Activated CD4-positive, alpha-beta T cell treated with anti-CD3 and anti-CD28 coated beads, Interleukin-2, amount 10 ng/mL, durations not matched to agents 24 days and 14 days (primary cell): ENCODE measurements at regions of chr18 and their contacts with region 1.

Region 1: GRCh38 chr18:36284671-36285295 is 12.7 kb upstream of the FHOD3 start:
- DNase-seq: peak; percentile 83
- H3K4me3 Mint-ChIP-seq: no peak overlapping the region
- H3K27ac Mint-ChIP-seq: no peak overlapping the region
- H3K4me1 Mint-ChIP-seq: peaks cover 3% of the 10 kb centered on the region
- H3K27me3 Mint-ChIP-seq: peaks cover 27% of the 10 kb centered on the region

Region 2: GRCh38 chr18:35756506-35757117 is 528.2 kb before region 1 on chr18:
- intact Hi-C with region 1: loop called (anchors 1 kb)
- DNase-seq: peak; percentile 87
- H3K4me3 Mint-ChIP-seq: no peak overlapping the region
- H3K27ac Mint-ChIP-seq: no peak overlapping the region
- H3K4me1 Mint-ChIP-seq: no peaks in the 10 kb centered on the region
- H3K27me3 Mint-ChIP-seq: peaks cover 16% of the 10 kb centered on the region

Region 3: DNA sequence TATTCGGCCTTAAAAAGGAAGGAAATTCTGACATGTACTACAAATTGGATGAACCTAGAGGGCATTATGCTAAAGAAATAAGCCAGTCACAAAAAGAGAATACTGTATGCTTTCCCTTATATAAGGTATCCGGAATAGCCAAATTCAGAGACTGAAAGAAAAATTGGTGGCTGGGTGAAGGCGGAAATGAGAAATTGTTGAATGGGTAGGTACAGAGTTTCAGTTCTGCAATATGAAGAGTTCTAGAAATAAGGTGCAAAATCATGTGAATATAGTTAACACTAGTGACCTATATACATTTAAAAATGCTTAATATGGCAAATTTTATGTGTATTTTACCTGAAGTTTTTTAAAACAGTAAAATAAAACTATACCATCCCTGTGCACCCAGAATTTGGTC is 269.2 kb before region 1 on chr18:
- intact Hi-C with region 1: loop called (anchors 1 kb)
- DNase-seq: no peak
- H3K4me3 Mint-ChIP-seq: no peak overlapping the region
- H3K27ac Mint-ChIP-seq: no peak overlapping the region
- H3K4me1 Mint-ChIP-seq: no peaks in the 10 kb centered on the region
- H3K27me3 Mint-ChIP-seq: no peaks in the 10 kb centered on the region

Region 4: DNA sequence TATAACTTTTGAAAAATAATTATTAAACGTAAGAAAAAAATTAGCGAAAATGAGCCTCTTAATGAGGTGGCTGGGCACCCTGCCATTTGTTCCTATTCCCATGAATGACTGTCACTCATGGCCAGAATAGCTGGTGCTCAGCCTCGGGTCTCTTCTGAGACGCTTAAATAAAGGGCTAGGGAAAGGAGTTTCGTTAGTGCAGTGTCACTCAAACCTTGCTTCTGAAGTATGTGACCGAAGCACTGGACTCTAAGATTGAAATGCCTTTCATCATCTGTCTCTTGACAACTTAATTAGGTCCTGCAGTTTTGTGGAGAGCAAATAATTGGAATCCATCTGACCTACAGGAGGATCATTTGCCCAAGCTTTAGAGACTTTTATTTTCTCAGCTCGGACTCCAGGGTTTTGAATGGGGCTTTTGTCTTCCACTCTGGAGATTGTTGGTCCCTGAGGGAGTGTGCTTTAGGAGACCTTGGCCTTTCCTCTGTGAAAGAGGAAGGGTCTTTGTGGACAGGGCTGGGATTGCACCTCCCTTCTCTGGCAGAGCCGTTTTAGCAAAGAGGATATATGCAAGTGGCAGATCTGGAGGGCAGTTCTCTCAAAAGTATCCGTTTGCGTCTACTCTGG is 29.6 kb before region 1 on chr18:
- intact Hi-C with region 1: no loop called
- DNase-seq: no peak
- H3K4me3 Mint-ChIP-seq: no peak overlapping the region
- H3K27ac Mint-ChIP-seq: no peak overlapping the region
- H3K4me1 Mint-ChIP-seq: no peaks in the 10 kb centered on the region
- H3K27me3 Mint-ChIP-seq: peaks cover 6% of the 10 kb centered on the region

Region 5: DNA sequence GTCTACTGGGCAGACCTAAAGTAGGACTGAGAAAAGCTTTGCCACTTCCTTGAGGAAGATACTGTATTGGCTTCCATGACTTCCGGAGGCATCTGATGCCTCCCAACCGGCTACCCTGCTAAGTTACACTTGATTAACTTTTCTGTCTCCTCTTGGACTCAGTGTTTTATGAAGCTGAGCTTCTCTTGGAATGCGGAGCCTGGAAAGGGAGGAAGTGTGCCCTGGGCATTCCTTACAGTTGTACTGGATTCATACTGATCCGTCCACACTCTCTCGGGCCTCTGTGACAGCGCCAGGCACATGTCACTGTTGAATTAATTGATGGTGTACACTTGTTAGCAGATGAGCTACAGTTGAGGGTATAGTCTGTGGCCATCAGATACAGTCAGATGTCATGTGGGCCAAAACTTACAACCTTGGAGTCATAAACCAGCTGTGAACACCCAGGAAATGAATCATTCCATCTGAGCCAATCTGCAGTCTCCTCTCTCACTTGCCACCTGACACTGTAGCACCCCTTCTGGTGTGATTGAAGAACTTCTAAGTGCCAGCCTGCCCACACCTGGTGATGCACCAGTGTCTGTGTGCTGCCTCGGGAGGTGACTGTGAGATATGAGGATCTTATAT is 135.2 kb after region 1 on chr18:
- intact Hi-C with region 1: no loop called
- DNase-seq: no peak
- H3K4me3 Mint-ChIP-seq: no peak overlapping the region
- H3K27ac Mint-ChIP-seq: no peak overlapping the region
- H3K4me1 Mint-ChIP-seq: no peaks in the 10 kb centered on the region
- H3K27me3 Mint-ChIP-seq: peaks cover 4% of the 10 kb centered on the region